ENCODE measurements at regions of chr12 and their contacts with region 1.

Region 1: DNA sequence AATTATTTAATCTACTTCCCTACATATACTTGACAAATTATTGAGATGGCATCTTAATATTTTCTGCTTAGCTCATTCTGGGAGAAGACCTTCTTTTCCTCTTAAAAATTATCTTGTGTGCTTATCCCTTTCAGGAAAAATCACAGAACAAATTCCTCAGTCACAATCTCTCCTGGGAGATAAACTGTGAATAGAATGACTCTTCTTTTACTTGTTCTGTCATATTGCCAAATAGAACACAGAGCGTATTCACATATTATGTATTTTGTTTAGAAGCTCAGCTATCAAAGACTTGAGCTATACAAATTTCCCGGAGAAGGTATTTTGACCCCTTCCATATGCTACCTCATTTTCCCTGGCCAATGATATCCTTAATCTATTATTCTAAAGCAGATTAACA is 146.7 kb downstream of the TMEM117 start:
- DNase-seq: no peak
- H3K4me3 ChIP-seq: no peak overlapping the region
- CTCF ChIP-seq: no peak

Region 2: GRCh38 chr12:44058366-44058765 is 75.8 kb after region 1 on chr12:
- in situ Hi-C with region 1: loop called (anchors 5 kb)
- DNase-seq: no peak
- H3K4me3 ChIP-seq: no peak overlapping the region
- CTCF ChIP-seq: no peak

Measured in astrocyte of the cerebellum (primary cell).